Sciatic nerve (tissue), 2 donors: ENCODE measurements at regions of chr12 and their contacts with region 1.

Region 1: DNA sequence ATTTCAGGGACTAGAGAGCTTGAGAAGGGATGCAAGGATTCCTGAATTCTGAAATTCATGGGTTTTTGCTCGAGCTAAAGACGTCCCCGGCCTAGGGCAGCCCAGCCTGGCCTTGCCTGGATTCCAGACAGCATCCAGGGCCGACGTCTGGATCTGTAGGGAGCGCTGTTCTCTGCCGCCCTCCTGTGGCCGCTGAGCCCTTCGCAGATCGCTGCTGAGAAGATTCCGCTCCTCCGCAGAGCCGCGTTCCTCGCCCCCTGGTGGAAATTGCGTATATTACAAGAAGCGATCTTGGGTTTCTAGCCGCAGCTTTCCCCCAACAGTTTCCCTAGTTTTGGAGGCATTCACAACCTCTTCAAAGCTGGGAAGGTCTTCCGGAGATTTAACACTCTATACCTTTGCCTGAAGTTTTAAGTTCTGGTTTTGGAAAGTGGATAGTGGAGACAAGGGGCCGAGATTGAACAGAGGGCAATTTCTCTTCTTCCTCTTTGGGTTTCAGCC is 5.1 kb downstream of the CISTR start:
- DNase-seq: peak; percentile 97
- ATAC-seq: peak; percentile 93

Region 2: DNA sequence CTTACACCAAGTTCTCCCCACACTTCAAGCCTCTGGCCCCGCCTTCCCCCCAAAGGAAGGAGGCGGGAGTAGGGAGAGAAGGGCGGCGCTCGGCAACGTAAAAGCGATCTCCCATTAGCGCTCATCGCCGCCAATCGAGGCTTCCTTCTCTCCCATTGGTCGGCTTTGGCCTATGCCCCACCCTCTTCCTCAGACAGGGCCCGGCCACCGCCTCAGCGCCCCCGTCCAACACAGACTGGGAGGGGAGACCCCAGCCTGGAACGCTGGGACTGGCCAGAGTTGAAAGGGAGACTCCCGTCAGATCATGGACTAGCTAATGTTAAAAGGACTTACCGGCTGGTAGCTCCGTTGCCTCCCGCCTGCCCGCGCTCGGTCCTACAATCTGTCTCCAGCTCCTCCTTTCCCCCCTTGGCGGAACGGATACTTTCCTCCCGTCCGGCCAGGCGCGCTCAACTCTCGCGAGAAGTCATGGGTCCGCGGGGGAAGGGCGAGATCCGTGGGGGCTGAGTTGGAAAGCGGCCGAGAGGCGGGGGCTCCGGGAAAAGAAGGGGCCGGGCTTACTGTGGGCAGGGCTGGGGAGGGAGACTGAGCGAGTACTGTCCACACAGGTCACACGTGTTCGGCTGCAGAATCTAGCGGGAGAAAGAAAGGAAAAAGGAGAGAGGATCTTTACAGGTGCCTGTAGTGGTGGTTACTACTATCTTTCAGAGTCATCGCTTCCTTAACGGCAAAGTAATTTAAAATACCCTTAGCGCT is 120.5 kb before region 1 on chr12 and contains the start of gene ATF7:
- intact Hi-C with region 1: no loop called
- DNase-seq: peak; percentile 100
- ATAC-seq: peak; percentile 98
- total RNA-seq, gene ATF7: 62.5 TPM

Region 3: GRCh38 chr12:53701518-53702260 is 45.0 kb before region 1 on chr12:
- intact Hi-C with region 1: loop called (anchors 5 kb)
- DNase-seq: peak; percentile 90
- ATAC-seq: peak; percentile 96

Region 4: DNA sequence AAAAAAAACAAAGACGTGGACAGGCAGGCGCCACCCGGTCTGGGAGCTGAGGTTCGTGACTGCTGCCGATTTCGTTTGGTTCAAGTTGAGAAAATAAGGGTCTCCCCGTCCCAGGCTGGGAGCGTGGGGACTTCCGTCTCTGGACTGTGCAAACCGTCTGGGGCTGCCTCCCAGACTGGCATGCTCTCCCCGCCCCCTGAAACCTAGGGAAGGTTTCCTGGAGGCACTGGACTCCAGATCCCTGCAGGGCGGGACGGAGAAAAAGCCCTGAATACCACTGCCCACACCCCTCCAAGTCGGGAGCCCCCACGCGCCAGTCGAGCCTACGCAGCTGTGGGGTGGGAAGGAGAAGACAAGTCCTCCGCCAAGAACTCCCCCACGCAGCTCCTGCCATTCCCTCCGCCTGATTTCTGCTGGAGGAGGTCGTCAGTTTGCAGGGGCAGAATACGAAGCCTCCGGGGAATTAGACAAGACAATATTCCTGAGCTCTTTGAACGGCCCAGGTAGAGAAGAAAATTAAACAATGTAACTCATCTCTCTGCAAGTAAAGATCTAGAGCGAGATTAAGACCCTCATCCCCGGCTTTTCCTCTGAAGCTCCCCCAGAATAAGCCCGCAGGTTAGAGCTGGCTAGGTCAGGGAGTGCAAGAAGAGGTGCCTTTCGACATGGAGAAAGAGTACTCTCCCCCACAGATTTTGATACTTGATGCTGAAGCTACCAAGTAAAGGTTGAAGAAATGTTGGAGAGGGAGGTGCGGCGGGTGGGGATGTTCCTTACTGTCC is 181.6 kb after region 1 on chr12:
- intact Hi-C with region 1: no loop called
- DNase-seq: no peak
- ATAC-seq: no peak